ENCODE measurements at regions of chr15 and their contacts with region 1.

Region 1: GRCh38 chr15:73633111-73633990 is at the start of gene NPTN:
- DNase-seq: peak; percentile 96
- ATAC-seq: peak; percentile 90
- H3K4me3 ChIP-seq: peak within 1 kb of the TSS; percentile 64
- H3K27ac ChIP-seq: peak within 1 kb of the TSS; percentile 95
- H3K4me1 ChIP-seq: peaks cover 15% of the 10 kb centered on the region
- H3K27me3 ChIP-seq: no peaks in the 10 kb centered on the region
- CTCF ChIP-seq: no peak
- POLR2A ChIP-seq: peak; percentile 85
- RAD21 ChIP-seq: no peak
- total RNA-seq, gene NPTN: 150 and 171 TPM in 2 replicates

Region 2: GRCh38 chr15:73021139-73021621 is 612.2 kb before region 1 on chr15:
- CTCF ChIA-PET with region 1: no interaction called
- POLR2A ChIA-PET with region 1: no interaction called
- dilution Hi-C with region 1: no loop called
- in situ Hi-C with region 1: no loop called
- intact Hi-C with region 1: no loop called
- DNase-seq: no peak
- ATAC-seq: 0 out of 2 replicates have a peak, but pooled peaks have one; percentile 22
- H3K4me3 ChIP-seq: no peak overlapping the region
- H3K27ac ChIP-seq: peak overlapping the region; percentile 49; the same call in 1 of the 2 replicates
- H3K4me1 ChIP-seq: peaks cover 17% of the 10 kb centered on the region
- H3K27me3 ChIP-seq: no peaks in the 10 kb centered on the region
- CTCF ChIP-seq: no peak
- POLR2A ChIP-seq: no peak
- RAD21 ChIP-seq: no peak

Region 3: GRCh38 chr15:73495171-73495570 is 138.2 kb before region 1 on chr15:
- CTCF ChIA-PET with region 1: interaction called, 10 read pairs
- POLR2A ChIA-PET with region 1: no interaction called
- dilution Hi-C with region 1: no loop called
- in situ Hi-C with region 1: no loop called
- intact Hi-C with region 1: no loop called
- DNase-seq: no peak
- ATAC-seq: no peak
- H3K4me3 ChIP-seq: no peak overlapping the region
- H3K27ac ChIP-seq: no peak overlapping the region
- H3K4me1 ChIP-seq: no peaks in the 10 kb centered on the region
- H3K27me3 ChIP-seq: peaks cover 9% of the 10 kb centered on the region
- CTCF ChIP-seq: no peak
- POLR2A ChIP-seq: no peak
- RAD21 ChIP-seq: no peak

Region 4: DNA sequence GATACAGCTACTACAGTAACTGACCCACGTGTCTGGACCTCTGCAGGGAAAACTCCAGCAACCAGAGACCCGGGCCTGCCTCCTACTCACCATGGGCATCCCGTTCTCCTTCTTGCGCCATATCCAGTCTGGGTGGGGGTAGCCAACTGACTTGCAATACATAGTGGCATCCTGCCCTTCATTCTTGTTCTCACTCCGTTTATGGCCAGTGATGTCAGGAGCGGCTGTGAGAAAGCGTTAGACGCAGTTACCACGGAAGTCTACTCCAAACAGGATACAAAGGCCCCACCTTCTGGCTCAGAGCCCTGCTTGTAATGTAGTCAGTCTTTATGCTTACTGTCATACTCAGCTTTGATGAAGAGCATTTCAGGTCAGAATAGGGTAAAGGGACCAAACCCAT is 59.8 kb before region 1 on chr15:
- CTCF ChIA-PET with region 1: interaction called, 4 read pairs
- POLR2A ChIA-PET with region 1: no interaction called
- dilution Hi-C with region 1: no loop called
- in situ Hi-C with region 1: loop called (anchors 5 kb)
- intact Hi-C with region 1: no loop called
- DNase-seq: peak; percentile 97
- ATAC-seq: peak; percentile 77
- H3K4me3 ChIP-seq: no peak overlapping the region
- H3K27ac ChIP-seq: peak overlapping the region; percentile 23; the same call in 1 of the 2 replicates
- H3K4me1 ChIP-seq: peaks cover 5% of the 10 kb centered on the region
- H3K27me3 ChIP-seq: no peaks in the 10 kb centered on the region
- CTCF ChIP-seq: no peak
- POLR2A ChIP-seq: no peak
- RAD21 ChIP-seq: no peak; the same call in 1 of the 2 replicates

Region 5: DNA sequence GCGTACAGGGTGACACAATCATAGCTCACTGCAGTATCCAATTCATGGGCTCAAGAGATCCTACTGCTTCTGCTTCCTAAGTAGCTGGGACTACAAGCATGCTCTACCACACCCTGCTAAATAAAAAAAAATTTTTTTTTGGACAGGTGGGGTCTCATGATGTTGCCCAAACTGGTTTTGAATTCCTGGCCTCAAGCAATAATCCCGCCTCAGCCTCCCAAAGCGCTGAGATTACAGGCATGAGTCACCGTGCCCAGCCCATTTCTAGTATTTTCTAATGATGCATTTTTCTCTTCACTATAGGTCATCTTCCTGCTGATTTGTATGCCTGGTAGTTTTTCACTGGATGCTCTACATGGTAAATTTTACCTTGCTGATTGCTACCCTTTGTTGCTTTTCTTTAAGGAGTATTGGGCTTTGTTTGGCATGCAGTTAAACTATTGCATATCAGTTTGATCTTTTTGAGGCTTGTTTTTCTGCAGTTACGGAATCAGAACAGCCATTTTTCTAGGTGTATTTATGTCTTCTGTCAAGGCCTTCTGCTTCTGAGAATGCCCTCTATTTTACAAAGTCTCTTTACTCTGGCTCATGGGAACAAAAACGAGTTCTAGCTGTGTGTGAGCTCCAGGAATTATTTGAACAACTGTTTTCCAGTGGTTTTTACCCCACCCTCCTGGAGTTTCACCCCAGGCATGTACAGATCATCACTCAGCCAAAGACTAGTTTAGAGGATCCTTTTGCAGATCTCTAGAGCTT is 14.1 kb after region 1 on chr15:
- CTCF ChIA-PET with region 1: interaction called, 25 read pairs
- POLR2A ChIA-PET with region 1: no interaction called
- dilution Hi-C with region 1: no loop called
- in situ Hi-C with region 1: no loop called
- intact Hi-C with region 1: no loop called
- DNase-seq: no peak
- ATAC-seq: no peak
- H3K4me3 ChIP-seq: no peak overlapping the region
- H3K27ac ChIP-seq: no peak overlapping the region
- H3K4me1 ChIP-seq: no peaks in the 10 kb centered on the region
- H3K27me3 ChIP-seq: peaks cover 11% of the 10 kb centered on the region
- CTCF ChIP-seq: no peak
- POLR2A ChIP-seq: no peak
- RAD21 ChIP-seq: no peak

Region 6: DNA sequence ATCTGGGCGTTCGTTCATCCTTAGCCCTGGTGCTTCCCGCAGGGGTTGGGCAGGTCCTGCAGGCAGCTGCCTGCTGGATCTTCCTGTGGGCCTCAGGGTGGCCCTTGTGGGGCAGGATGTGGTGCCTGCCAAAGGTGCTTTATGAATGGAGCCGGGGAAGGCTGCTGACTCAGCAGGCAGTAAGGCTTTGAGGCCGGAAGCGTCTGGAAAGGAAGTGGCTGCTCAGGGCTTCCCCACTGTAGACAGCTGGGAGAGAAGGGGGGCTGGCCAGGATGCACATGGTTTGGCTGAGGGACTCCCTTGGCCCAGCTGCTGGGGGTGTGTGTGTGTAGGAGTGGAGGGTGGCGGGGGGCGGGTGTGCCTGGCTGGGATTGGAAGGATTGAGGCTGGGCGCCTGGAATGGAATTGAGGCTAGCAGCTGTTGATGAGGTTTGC is 63.7 kb after region 1 on chr15:
- CTCF ChIA-PET with region 1: interaction called, 13 read pairs
- POLR2A ChIA-PET with region 1: no interaction called
- dilution Hi-C with region 1: no loop called
- in situ Hi-C with region 1: loop called (anchors 5 kb)
- intact Hi-C with region 1: loop called (anchors 1 kb)
- DNase-seq: peak; percentile 95
- ATAC-seq: peak; percentile 88
- H3K4me3 ChIP-seq: no peak overlapping the region
- H3K27ac ChIP-seq: peak overlapping the region; percentile 36
- H3K4me1 ChIP-seq: peaks cover 21% of the 10 kb centered on the region
- H3K27me3 ChIP-seq: no peaks in the 10 kb centered on the region
- CTCF ChIP-seq: no peak
- POLR2A ChIP-seq: no peak
- RAD21 ChIP-seq: 0 out of 2 replicates have a peak, but pooled peaks have one; percentile 19

Measured in IMR-90 (cell line).